B cell (primary cell): ENCODE measurements at regions of chr12 and their contacts with region 1.

Region 1: GRCh38 chr12:124863416-124864325 is at the start of gene SCARB1:
- DNase-seq: peak; percentile 87
- ATAC-seq: peak; percentile 89
- H3K4me3 ChIP-seq: peak within 1 kb of the TSS; percentile 19 to 78 (median 62)
- H3K4me3 Mint-ChIP-seq: peak within 1 kb of the TSS; percentile 87
- H3K27ac ChIP-seq: peak within 1 kb of the TSS; percentile 63 to 80
- H3K27ac Mint-ChIP-seq: peak within 1 kb of the TSS; percentile 87
- H3K4me1 ChIP-seq: peaks cover 18 to 31% of the 10 kb centered on the region in 2 donors
- H3K4me1 Mint-ChIP-seq: peaks cover 42% of the 10 kb centered on the region
- H3K27me3 ChIP-seq: no peaks in the 10 kb centered on the region
- H3K27me3 Mint-ChIP-seq: no peaks in the 10 kb centered on the region
- CTCF ChIP-seq: no peak
- total RNA-seq, gene SCARB1: 25.8 and 26.8 TPM in 2 replicates

Region 2: DNA sequence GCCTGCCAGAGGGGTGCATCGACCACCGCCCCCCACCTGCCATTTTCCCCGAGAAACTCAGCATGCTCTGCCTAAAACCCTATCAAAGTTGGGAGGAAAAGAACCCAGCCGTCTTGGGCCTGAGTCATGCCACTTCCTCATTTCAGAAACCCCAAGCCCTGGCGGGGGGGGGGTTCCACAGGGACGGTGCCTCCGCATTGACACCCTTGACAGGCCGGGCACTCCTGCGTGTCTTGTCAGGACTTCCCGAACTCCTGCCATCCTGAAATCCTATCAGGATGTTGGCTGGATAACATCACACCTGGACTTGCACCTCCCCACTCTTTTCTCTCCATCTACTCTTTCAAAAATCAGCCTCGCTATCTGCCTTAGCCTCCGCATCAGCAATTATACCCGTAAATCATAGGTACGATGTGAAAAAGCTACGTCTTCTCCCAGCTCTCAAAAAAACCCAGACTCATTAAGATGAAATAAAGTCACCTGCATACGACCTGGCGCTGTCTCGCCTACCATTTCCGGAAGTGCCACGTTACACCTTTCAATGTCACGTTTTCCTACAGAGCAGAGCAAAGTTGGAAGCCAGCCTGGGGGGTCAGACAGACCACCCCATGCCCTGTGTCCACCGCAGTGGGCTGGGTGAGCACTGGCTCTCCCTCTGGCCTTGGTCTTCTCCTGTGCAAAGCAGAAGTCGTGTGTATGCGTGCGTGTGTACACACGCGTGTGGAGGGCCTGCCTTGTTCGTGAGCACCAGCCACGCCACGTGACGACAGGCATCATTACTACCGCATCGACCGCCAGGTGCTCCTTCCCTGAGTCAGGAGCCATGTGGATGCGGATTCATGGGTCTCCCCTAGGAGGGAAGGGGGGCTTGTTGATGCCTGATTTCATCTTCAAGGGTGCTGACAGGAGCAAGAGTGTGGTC is 472.1 kb before region 1 on chr12:
- CTCF ChIA-PET with region 1: no interaction called
- POLR2A ChIA-PET with region 1: no interaction called
- intact Hi-C with region 1: loop called (anchors 5 kb)
- DNase-seq: peak; percentile 88
- ATAC-seq: peak; percentile 74
- H3K4me3 ChIP-seq: peak overlapping the region; percentile 26 to 63 (median 31)
- H3K4me3 Mint-ChIP-seq: peak overlapping the region; percentile 94
- H3K27ac ChIP-seq: peak overlapping the region; percentile 63 to 86
- H3K27ac Mint-ChIP-seq: peak overlapping the region; percentile 74
- H3K4me1 ChIP-seq: peaks cover 39 to 49% of the 10 kb centered on the region in 2 donors
- H3K4me1 Mint-ChIP-seq: peaks cover 39% of the 10 kb centered on the region
- H3K27me3 ChIP-seq: no peaks in the 10 kb centered on the region
- H3K27me3 Mint-ChIP-seq: no peaks in the 10 kb centered on the region
- CTCF ChIP-seq: no peak

Region 3: DNA sequence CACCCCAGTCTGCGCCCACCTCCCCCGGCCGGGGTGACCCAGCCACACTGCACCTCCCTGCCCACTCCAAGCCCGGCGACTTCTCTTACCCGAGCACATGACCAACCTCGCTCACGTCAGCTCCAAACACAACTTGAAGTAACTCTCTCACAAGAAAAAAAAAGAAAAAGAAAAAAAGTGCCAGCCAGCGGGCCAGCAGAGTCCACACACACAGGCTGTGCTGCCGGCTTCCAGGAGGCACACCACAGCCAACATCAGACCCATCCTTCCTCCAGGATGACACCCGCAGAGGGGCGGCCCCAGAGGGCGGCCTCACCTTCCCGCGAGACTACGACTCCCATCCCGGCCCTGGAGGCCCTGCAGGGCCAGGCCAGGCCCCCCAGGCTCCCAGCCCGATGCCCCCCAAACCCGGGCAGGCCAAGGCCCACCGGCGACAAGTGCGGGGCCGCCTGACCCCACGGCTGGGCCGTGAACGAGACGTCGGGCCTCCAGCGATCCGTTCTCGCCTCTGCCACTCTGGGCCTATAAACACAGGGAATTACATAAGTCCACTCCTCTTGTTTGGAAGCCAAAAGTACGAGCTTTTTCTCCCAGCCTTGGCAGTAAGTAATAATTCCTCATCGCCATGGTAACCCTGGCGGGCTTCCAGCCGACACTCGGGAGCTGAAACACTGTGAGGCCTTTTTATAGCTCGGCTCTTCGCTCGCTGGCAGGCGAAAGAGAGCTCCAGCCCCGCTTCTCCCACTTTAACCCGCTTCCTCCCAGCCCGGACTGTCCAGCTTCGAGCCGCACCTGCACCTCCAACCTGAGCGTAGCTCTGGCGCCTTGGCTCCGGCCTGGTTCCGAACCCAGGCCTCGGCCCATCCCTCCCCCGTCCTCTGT is 345.4 kb before region 1 on chr12:
- CTCF ChIA-PET with region 1: no interaction called
- POLR2A ChIA-PET with region 1: no interaction called
- intact Hi-C with region 1: no loop called
- DNase-seq: no peak
- ATAC-seq: no peak
- H3K4me3 ChIP-seq: no peak overlapping the region
- H3K4me3 Mint-ChIP-seq: peak overlapping the region; percentile 19
- H3K27ac ChIP-seq: no peak overlapping the region
- H3K27ac Mint-ChIP-seq: no peak overlapping the region
- H3K4me1 ChIP-seq: peaks cover 13 to 18% of the 10 kb centered on the region in 2 donors
- H3K4me1 Mint-ChIP-seq: peaks cover 35% of the 10 kb centered on the region
- H3K27me3 ChIP-seq: no peaks in the 10 kb centered on the region
- H3K27me3 Mint-ChIP-seq: no peaks in the 10 kb centered on the region
- CTCF ChIP-seq: no peak

Region 4: DNA sequence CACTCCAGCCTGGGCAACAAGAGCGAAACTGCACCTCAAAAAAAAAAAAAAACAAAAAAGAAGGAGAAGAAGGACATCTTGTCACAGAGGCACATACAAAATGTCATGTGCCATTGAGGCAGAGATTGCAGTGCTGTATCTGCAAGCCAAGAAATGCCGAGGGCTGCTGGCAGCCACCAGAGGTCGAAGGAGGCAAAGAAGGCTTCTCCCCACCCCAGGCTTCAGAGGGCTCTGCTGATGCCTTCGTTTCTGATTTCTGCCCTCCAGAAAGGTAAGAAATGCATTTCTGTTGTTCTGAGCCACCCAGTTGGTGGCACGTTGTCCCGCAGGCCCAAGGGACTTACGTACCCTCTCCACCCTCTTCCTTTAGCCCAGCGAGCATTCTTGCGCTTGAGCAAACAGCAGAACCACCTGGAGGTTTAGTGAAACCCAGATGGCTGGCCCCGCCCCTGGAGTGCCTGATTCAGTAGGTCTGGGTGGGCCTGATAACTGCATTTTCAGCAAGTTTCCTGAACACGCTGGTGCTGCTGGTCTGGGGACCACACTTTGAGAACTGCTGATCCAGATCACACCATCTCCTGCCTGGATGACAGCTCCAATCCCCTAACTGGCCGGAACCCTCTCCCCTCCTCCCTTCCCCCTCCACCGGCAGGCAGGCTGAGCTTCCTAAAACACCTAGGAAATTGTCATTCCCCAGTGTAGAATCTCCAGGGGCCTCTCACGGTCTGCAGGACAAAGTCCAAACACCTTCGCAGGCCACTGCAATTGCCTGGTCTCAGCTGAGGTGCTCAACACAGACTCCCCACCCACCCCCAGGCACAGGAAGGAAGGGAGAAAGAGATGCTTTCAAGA is 21.1 kb after region 1 on chr12:
- CTCF ChIA-PET with region 1: interaction called, 6 read pairs
- POLR2A ChIA-PET with region 1: interaction called, 3 read pairs
- intact Hi-C with region 1: loop called (anchors 1 kb)
- DNase-seq: peak; percentile 88
- ATAC-seq: peak; percentile 96
- H3K4me3 ChIP-seq: peak overlapping the region in 4 of 5 experiments; percentile 11 to 38 (median 28)
- H3K4me3 Mint-ChIP-seq: peak overlapping the region; percentile 83
- H3K27ac ChIP-seq: peak overlapping the region; percentile 59 to 67
- H3K27ac Mint-ChIP-seq: peak overlapping the region; percentile 95
- H3K4me1 ChIP-seq: peaks cover 55 to 70% of the 10 kb centered on the region in 2 donors
- H3K4me1 Mint-ChIP-seq: peaks cover 64% of the 10 kb centered on the region
- H3K27me3 ChIP-seq: peaks cover 0 to 3% (median 0%) of the 10 kb centered on the region in 4 experiments
- H3K27me3 Mint-ChIP-seq: no peaks in the 10 kb centered on the region
- CTCF ChIP-seq: no peak

Region 5: DNA sequence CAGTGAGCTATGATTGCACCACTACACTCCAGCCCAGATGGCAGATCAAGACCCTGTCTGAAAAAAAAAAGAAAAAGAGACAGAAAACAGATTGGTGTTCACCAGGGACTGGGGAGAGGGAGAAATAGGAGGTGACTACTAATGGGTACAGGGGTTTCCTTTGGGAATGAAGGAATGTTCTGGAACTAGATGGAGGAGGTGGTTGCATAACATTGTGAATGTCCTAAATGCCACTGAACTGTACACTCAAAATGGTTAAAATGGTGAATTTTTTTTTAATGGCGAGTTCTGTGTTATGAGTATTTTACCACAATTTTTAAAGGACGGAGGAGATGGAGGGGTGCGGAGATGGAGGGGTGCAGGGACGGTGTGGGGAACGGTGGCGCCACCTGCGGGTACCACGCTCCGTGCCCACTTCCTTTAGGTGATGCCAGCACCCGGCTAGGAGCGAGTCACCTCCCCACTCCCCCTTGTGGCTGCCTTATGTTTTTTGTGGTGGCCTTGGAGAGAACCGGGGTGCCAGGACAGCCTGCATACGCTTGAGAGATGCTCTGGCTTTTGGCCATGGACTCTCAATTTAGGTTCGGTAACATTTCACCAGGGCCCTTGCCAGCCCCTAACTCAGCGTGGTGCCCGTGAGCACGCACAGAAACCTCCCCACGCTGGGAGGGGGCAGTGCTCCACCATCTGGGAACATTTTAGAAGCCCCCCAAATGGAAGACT is 34.7 kb after region 1 on chr12:
- CTCF ChIA-PET with region 1: interaction called, 5 read pairs
- POLR2A ChIA-PET with region 1: interaction called, 3 read pairs
- intact Hi-C with region 1: loop called (anchors 2 kb)
- DNase-seq: peak; percentile 86
- ATAC-seq: peak; percentile 91
- H3K4me3 ChIP-seq: peak overlapping the region in 1 of 5 experiments; percentile 17
- H3K4me3 Mint-ChIP-seq: peak overlapping the region; percentile 60
- H3K27ac ChIP-seq: no peak overlapping the region
- H3K27ac Mint-ChIP-seq: no peak overlapping the region
- H3K4me1 ChIP-seq: peaks cover 26 to 39% of the 10 kb centered on the region in 2 donors
- H3K4me1 Mint-ChIP-seq: peaks cover 46% of the 10 kb centered on the region
- H3K27me3 ChIP-seq: no peaks in the 10 kb centered on the region
- H3K27me3 Mint-ChIP-seq: no peaks in the 10 kb centered on the region
- CTCF ChIP-seq: peak; percentile 86

Region 6: GRCh38 chr12:124927201-124928094 is 63.8 kb after region 1 on chr12:
- CTCF ChIA-PET with region 1: no interaction called
- POLR2A ChIA-PET with region 1: interaction called, 10 read pairs
- intact Hi-C with region 1: no loop called
- DNase-seq: peak; percentile 94
- ATAC-seq: peak; percentile 88
- H3K4me3 ChIP-seq: peak overlapping the region; percentile 69 to 91 (median 77)
- H3K4me3 Mint-ChIP-seq: peak overlapping the region; percentile 93
- H3K27ac ChIP-seq: peak overlapping the region; percentile 43 to 50
- H3K27ac Mint-ChIP-seq: peak overlapping the region; percentile 99
- H3K4me1 ChIP-seq: peaks cover 16 to 24% of the 10 kb centered on the region in 2 donors
- H3K4me1 Mint-ChIP-seq: peaks cover 29% of the 10 kb centered on the region
- H3K27me3 ChIP-seq: no peaks in the 10 kb centered on the region
- H3K27me3 Mint-ChIP-seq: no peaks in the 10 kb centered on the region
- CTCF ChIP-seq: no peak

Region 7: DNA sequence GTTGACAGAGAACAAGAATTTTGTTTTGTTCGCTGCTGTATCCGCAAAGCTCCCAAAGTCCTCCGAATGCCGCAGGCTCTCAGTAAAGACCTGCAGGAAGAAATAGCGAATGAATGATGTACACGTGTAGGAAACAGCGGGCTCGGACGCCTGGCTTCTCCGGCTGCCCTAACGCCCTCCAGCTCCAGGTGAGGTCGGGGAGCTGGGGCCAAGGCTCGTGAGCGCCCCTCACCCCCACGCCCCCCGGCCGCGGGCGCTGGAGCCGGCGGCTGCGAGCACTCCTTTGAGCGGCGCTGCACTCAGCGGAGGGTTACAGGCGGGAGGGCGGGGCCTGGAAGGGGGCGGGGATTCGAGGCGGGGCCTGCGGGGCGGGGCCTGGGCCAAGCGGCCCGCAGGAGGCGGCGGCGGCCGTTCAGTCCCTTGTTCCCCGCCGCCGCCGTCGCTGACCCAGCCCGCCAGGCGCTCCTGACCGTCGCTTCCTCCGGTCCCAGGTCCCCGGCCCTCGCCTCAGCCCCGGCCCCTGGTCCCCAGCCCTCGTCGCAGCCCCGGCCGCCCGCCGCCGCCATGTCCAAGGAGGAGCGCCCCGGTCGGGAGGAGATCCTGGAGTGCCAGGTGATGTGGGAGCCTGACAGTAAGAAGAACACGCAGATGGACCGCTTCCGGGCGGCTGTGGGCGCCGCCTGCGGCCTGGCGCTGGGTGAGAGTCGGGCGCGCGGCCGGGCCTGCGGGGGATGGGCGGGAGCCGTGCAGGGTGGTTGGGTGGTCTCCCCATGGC is 201.5 kb after region 1 on chr12 and contains the start of gene AACS:
- CTCF ChIA-PET with region 1: no interaction called
- POLR2A ChIA-PET with region 1: no interaction called
- intact Hi-C with region 1: loop called (anchors 2 kb)
- DNase-seq: peak; percentile 85
- ATAC-seq: peak; percentile 99
- H3K4me3 ChIP-seq: peak within 1 kb of the TSS; percentile 40 to 79 (median 74)
- H3K4me3 Mint-ChIP-seq: peak within 1 kb of the TSS; percentile 85
- H3K27ac ChIP-seq: peak within 1 kb of the TSS in 1 of 2 donors; percentile 72
- H3K27ac Mint-ChIP-seq: peak within 1 kb of the TSS; percentile 26
- H3K4me1 ChIP-seq: peaks cover 10 to 12% of the 10 kb centered on the region in 2 donors
- H3K4me1 Mint-ChIP-seq: peaks cover 13% of the 10 kb centered on the region
- H3K27me3 ChIP-seq: peaks cover 0 to 6% (median 0%) of the 10 kb centered on the region in 4 experiments
- H3K27me3 Mint-ChIP-seq: peaks cover 6% of the 10 kb centered on the region
- CTCF ChIP-seq: no peak
- total RNA-seq, gene AACS: 20.8 and 27.5 TPM in 2 replicates

Region 8: DNA sequence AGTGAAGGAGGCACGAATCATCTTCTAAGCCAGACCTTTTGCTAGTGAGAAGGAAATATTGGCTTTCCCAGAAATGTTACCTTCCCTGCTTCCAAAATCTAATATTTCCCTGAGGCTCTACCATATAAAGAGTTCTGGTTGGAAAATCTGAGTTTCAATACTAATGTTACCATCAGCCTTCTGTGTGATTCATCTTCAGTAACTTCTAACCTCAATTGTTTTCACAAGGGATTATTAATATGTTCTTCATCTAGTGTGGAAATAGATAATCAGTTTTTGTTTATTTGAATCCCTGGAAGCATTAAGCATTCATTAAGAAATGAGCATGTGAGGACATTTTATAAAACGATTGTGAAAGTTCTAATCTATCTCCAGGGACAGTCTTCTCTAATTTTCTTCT is 922.5 kb after region 1 on chr12:
- CTCF ChIA-PET with region 1: no interaction called
- POLR2A ChIA-PET with region 1: no interaction called
- intact Hi-C with region 1: no loop called
- DNase-seq: no peak
- ATAC-seq: no peak
- H3K4me3 ChIP-seq: no peak overlapping the region
- H3K4me3 Mint-ChIP-seq: no peak overlapping the region
- H3K27ac ChIP-seq: no peak overlapping the region
- H3K27ac Mint-ChIP-seq: no peak overlapping the region
- H3K4me1 ChIP-seq: no peaks in the 10 kb centered on the region
- H3K4me1 Mint-ChIP-seq: no peaks in the 10 kb centered on the region
- H3K27me3 ChIP-seq: no peaks in the 10 kb centered on the region
- H3K27me3 Mint-ChIP-seq: no peaks in the 10 kb centered on the region
- CTCF ChIP-seq: no peak